GM13977 (cell line): ENCODE measurements at regions of chr16 and their contacts with region 1.

Region 1: GRCh38 chr16:2497116-2497630 is 16.6 kb upstream of the ATP6V0C start:
- DNase-seq: no peak
- CTCF ChIP-seq: no peak

Region 2: DNA sequence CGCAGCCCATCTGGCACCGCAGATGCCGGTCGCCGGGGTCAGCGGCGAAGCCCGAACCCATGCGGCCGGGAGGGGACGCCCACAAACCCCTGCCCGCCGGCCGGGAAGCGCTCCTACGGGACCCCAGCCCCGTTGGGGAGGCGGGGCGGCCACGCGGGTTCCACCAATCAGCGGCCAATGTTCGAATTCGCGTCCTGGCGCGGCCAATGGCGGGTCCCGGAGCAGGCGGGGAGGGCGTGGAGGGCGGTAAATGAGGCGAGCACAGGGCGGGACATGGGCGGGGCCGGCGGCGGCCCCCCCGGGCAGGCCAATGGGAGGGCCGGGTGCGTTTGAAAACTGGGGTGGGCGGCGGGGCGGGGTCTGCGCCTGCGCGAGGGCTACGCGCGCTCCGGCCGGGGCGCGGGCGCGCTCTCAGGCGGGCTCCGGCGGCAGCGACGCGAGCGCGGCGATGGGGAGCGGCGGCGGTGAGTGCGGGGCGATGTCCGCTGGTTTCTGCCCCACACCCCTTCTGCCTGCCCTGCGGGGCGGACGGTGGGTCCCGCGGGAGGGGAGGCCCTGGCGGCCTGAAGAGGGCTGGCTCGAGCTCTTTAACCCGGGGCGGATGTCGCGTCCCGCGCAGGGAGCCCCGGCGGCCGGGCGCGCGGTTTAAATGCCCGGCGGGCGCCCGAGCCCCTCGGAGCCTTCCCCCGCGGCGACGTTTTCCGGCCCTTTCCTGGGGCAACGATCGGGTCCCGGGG is 68.0 kb before region 1 on chr16 and contains the start of gene CCNF:
- in situ Hi-C with region 1: no loop called
- DNase-seq: peak; percentile 100
- CTCF ChIP-seq: peak; percentile 4

Region 3: GRCh38 chr16:2447920-2448583 is 49.1 kb before region 1 on chr16:
- in situ Hi-C with region 1: loop called (anchors 10 kb)
- DNase-seq: no peak
- CTCF ChIP-seq: no peak